PC-3 (cell line): ENCODE measurements at regions of chr12 and their contacts with region 1.

Region 1: DNA sequence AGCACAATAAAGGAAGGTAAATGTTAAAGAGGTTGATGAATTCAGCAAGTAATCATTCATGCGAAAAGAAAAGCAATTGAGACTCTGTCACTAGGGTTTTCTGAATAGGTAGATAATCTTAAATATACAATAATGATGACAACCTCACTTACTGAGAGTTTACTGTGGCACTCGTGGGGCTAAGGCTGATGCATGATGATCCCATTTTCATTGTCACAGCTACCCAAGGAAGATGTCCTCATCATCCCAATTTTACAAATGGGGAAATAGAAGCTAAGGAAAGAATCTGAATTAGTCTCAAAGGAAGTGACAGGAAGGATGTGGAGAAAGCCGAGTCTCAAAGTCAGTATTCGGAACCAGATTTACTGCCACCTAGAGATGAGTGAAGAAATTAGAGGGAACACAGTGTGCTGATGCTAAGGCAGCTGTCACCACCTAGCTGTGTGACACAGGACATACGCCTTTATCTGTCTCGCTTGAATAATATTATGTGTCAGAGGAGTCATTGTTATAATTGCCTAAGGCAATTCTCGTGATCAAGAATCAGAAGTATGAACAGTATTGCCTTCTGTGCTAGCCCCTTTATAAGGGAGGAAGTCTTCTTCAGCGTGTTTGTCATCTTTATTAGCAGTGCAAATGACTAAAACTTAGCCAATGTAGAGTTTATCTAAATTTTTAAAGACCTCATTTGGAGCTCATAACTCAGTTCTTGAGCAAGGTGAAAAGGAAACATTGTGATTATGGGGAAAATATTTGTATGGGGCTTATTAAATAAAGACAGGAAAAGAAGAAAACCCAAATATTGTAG is 63.2 kb downstream of the ERGIC2 start:
- DNase-seq: peak; percentile 96
- ATAC-seq: peak; percentile 85
- H3K4me3 ChIP-seq: no peak overlapping the region
- H3K27ac ChIP-seq: no peak overlapping the region
- H3K4me1 ChIP-seq: peaks cover 38% of the 10 kb centered on the region
- H3K27me3 ChIP-seq: no peaks in the 10 kb centered on the region
- CTCF ChIP-seq: peak; percentile 100

Region 2: DNA sequence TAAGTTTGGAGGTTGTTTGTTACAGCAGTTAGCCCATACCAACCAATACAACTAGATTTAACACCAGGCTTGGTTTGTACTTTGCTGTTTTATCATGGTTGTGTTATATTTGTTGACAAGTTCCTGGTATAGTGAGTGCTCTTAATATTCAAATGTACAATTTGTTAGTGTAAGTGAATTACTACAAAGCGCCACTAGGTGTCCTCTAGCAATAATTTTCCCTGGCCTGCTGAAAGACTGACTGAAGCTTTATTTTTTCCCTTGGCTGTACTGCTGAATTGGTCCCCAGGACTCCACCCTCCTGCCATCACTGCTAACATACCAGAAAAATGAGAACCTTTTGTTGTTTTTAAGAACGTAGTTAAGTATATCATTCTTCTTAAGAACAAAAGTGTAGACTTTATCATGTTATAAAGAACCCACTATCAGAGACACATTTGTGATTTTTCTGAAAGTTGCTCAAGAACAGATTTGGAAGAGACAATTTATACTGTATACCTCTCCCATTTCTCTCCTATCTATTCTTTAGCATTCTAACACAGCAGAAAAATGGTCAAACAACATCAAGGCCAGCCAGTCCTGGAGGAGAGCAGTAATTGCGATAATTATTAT is 244.0 kb before region 1 on chr12:
- CTCF ChIA-PET with region 1: interaction called, 16 read pairs
- POLR2A ChIA-PET with region 1: no interaction called
- intact Hi-C with region 1: loop called (anchors 1 kb)
- DNase-seq: peak; percentile 92
- ATAC-seq: peak; percentile 58
- H3K4me3 ChIP-seq: no peak overlapping the region
- H3K27ac ChIP-seq: peak overlapping the region; percentile 43
- H3K4me1 ChIP-seq: peaks cover 31% of the 10 kb centered on the region
- H3K27me3 ChIP-seq: no peaks in the 10 kb centered on the region
- CTCF ChIP-seq: peak; percentile 99

Region 3: DNA sequence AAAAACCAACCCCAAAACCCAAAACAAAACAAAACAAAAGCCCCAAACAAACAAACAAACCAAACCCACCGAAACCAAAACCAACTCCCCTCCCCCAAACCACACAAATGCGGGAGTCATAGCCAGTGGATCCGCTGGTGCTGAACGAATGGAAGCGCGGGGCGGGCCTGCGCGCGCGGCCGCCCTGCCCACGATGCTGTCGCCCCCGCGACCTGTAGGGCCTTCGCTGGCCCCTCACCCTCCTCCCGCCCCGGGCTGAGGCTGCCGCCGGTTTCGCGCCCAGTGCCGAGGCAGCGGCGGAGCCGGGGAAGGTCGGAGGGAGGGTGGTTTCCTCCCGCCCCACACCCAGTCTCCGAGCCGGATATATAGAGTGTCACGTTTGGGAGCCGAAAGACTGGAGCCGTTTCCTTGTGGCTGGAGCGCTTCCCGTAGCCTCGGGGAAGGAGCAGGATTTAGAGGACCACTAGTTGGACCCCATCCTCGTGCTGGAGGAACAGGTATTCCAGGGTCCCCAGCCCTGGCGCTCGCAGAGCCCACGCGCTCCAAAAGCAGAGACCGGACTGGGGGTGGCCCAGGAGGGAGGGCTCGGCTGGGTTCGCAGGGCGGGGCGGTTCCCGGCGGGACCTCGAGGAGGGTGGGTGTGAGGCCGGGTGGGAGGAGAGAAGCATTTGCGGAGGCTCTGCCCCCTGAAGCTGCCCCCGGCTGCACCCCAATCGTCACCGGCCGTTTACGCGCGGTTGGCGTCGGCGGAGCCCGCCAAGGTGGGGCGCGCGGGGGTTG is 168.7 kb before region 1 on chr12 and contains the start of gene FAR2:
- CTCF ChIA-PET with region 1: interaction called, 8 read pairs
- POLR2A ChIA-PET with region 1: no interaction called
- intact Hi-C with region 1: loop called (anchors 5 kb)
- DNase-seq: peak; percentile 69
- ATAC-seq: peak; percentile 77
- H3K4me3 ChIP-seq: peak within 1 kb of the TSS; percentile 81
- H3K27ac ChIP-seq: peak within 1 kb of the TSS; percentile 17
- H3K4me1 ChIP-seq: peaks cover 16% of the 10 kb centered on the region
- H3K27me3 ChIP-seq: no peaks in the 10 kb centered on the region
- CTCF ChIP-seq: no peak; the same call in 1 of the 2 replicates
- total RNA-seq, gene FAR2: 10.2 and 13.5 TPM in 2 replicates

Region 4: GRCh38 chr12:29334937-29335336 is 17.2 kb after region 1 on chr12:
- CTCF ChIA-PET with region 1: interaction called, 5 read pairs
- POLR2A ChIA-PET with region 1: no interaction called
- intact Hi-C with region 1: loop called (anchors 2 kb)
- DNase-seq: no peak
- ATAC-seq: no peak
- H3K4me3 ChIP-seq: no peak overlapping the region
- H3K27ac ChIP-seq: no peak overlapping the region
- H3K4me1 ChIP-seq: no peaks in the 10 kb centered on the region
- H3K27me3 ChIP-seq: no peaks in the 10 kb centered on the region
- CTCF ChIP-seq: no peak

Region 5: GRCh38 chr12:29380536-29381523 is 63.1 kb after region 1 on chr12 and contains the start of gene ERGIC2:
- CTCF ChIA-PET with region 1: interaction called, 3 read pairs
- POLR2A ChIA-PET with region 1: no interaction called
- intact Hi-C with region 1: loop called (anchors 2 kb)
- DNase-seq: peak; percentile 100
- ATAC-seq: peak; percentile 94
- H3K4me3 ChIP-seq: peak within 1 kb of the TSS; percentile 77
- H3K27ac ChIP-seq: peak within 1 kb of the TSS; percentile 81
- H3K4me1 ChIP-seq: peaks cover 22% of the 10 kb centered on the region
- H3K27me3 ChIP-seq: no peaks in the 10 kb centered on the region
- CTCF ChIP-seq: no peak
- total RNA-seq, gene ERGIC2: 142 and 184 TPM in 2 replicates